Breast epithelium (tissue), 4 donors: ENCODE measurements at regions of chr1 and their contacts with region 1.

Region 1: GRCh38 chr1:239098400-239099037 is 287.8 kb upstream of the CHRM3 start:
- DNase-seq: no peak
- H3K4me3 ChIP-seq: no peak overlapping the region
- H3K27ac ChIP-seq: no peak overlapping the region
- H3K4me1 ChIP-seq: no peaks in the 10 kb centered on the region
- H3K27me3 ChIP-seq: no peaks in the 10 kb centered on the region
- CTCF ChIP-seq: no peak
- POLR2A ChIP-seq: no peak

Region 2: DNA sequence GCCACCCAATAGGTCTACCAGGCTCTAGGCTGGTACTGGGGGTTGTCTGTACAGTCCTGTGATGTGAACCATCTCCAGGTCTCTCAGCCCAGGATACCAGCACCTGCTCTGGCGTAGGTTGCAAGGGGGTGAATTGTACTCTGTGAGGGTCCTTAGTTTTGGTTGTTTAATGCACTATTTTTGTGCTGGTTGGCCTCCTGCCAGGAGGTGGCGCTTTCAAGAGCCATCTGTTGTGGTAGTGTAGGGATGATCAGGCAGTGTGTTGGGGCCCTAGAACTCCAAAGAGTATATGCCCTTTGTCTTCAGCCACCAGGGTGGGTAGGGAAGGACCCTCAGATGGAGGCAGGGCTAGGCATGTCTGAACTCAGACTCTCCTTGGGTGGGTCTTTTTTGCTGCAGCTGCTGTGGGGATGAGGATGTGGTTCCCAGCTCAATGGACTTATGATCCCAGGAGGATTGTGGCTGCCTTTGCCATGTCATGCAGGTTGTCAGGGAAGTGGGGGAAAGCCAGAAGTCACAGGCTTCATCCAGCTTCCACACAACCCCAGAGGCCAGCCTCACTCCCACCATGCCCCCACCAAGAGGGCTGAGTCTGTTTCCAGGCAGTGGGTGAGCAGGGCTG is 13.9 kb before region 1 on chr1:
- intact Hi-C with region 1: no loop called
- DNase-seq: no peak
- H3K4me3 ChIP-seq: no peak overlapping the region
- H3K27ac ChIP-seq: no peak overlapping the region
- H3K4me1 ChIP-seq: no peaks in the 10 kb centered on the region
- H3K27me3 ChIP-seq: no peaks in the 10 kb centered on the region
- CTCF ChIP-seq: no peak
- POLR2A ChIP-seq: no peak

Region 3: DNA sequence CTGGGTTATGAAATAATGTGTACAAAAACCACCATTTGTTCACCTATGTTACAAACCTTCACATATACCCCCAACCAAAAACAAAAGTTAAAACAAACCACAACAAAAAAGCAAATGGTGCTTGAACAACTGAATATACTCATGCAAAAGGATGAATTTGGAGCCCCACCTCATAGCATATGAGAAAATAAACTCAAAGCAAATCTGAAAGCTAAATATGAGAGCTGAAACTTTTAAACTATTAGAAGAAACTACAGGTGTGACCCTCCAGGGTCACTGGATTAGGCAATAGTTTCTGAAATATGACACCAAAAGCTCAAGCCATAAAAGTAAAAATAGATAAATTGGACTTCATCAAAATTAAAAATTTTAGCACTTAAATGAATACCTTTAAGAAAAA is 72.3 kb after region 1 on chr1:
- intact Hi-C with region 1: loop called (anchors 2 kb)
- DNase-seq: no peak
- H3K4me3 ChIP-seq: no peak overlapping the region
- H3K27ac ChIP-seq: no peak overlapping the region
- H3K4me1 ChIP-seq: no peaks in the 10 kb centered on the region
- H3K27me3 ChIP-seq: no peaks in the 10 kb centered on the region
- CTCF ChIP-seq: no peak
- POLR2A ChIP-seq: no peak